A673 (cell line): ENCODE measurements at regions of chr3 and their contacts with region 1.

Region 1: GRCh38 chr3:136396916-136397315 is 146.8 kb downstream of the PCCB start:
- DNase-seq: no peak
- H3K4me3 ChIP-seq: no peak overlapping the region
- H3K27ac ChIP-seq: no peak overlapping the region
- H3K4me1 ChIP-seq: no peaks in the 10 kb centered on the region
- H3K27me3 ChIP-seq: no peaks in the 10 kb centered on the region
- CTCF ChIP-seq: no peak

Region 2: GRCh38 chr3:136093771-136094170 is 303.1 kb before region 1 on chr3:
- CTCF ChIA-PET with region 1: interaction called, 11 read pairs
- POLR2A ChIA-PET with region 1: no interaction called
- intact Hi-C with region 1: no loop called
- DNase-seq: no peak
- H3K4me3 ChIP-seq: no peak overlapping the region
- H3K27ac ChIP-seq: no peak overlapping the region
- H3K4me1 ChIP-seq: peaks cover 8% of the 10 kb centered on the region
- H3K27me3 ChIP-seq: no peaks in the 10 kb centered on the region
- CTCF ChIP-seq: no peak

Region 3: GRCh38 chr3:136385457-136385856 is 11.5 kb before region 1 on chr3:
- CTCF ChIA-PET with region 1: no interaction called
- POLR2A ChIA-PET with region 1: interaction called, 12 read pairs
- intact Hi-C with region 1: no loop called
- DNase-seq: no peak
- H3K4me3 ChIP-seq: no peak overlapping the region
- H3K27ac ChIP-seq: no peak overlapping the region
- H3K4me1 ChIP-seq: no peaks in the 10 kb centered on the region
- H3K27me3 ChIP-seq: no peaks in the 10 kb centered on the region
- CTCF ChIP-seq: no peak

Region 4: GRCh38 chr3:136893848-136894443 is 497.0 kb after region 1 on chr3:
- CTCF ChIA-PET with region 1: no interaction called
- POLR2A ChIA-PET with region 1: no interaction called
- intact Hi-C with region 1: no loop called
- DNase-seq: peak; percentile 57
- H3K4me3 ChIP-seq: no peak overlapping the region
- H3K27ac ChIP-seq: no peak overlapping the region
- H3K4me1 ChIP-seq: peaks cover 13% of the 10 kb centered on the region
- H3K27me3 ChIP-seq: no peaks in the 10 kb centered on the region
- CTCF ChIP-seq: no peak